ENCODE measurements at regions of chr13 and their contacts with region 1.

Region 1: GRCh38 chr13:23871616-23872220 is 17.5 kb downstream of the MIPEP start:
- DNase-seq: no peak
- H3K4me3 ChIP-seq: no peak overlapping the region
- H3K27ac ChIP-seq: no peak overlapping the region
- H3K4me1 ChIP-seq: no peaks in the 10 kb centered on the region
- H3K27me3 ChIP-seq: no peaks in the 10 kb centered on the region
- CTCF ChIP-seq: peak; percentile 54 to 56 (median 56)
- EP300 ChIP-seq: no peak
- POLR2A ChIP-seq: no peak

Region 2: GRCh38 chr13:23466144-23467002 is 405.3 kb before region 1 on chr13:
- in situ Hi-C with region 1: loop called (anchors 10 to 25 kb)
- intact Hi-C with region 1: loop called (anchors 10 kb)
- DNase-seq: peak; percentile 57
- H3K4me3 ChIP-seq: peak overlapping the region; percentile 20 to 53 (median 30)
- H3K27ac ChIP-seq: peak overlapping the region; percentile 59 to 87 (median 70)
- H3K4me1 ChIP-seq: peaks cover 0 to 13% (median 9%) of the 10 kb centered on the region in 4 donors
- H3K27me3 ChIP-seq: peaks cover 7% of the 10 kb centered on the region
- CTCF ChIP-seq: peak; percentile 35 to 61 (median 53)
- EP300 ChIP-seq: no peak
- POLR2A ChIP-seq: no peak

Region 3: DNA sequence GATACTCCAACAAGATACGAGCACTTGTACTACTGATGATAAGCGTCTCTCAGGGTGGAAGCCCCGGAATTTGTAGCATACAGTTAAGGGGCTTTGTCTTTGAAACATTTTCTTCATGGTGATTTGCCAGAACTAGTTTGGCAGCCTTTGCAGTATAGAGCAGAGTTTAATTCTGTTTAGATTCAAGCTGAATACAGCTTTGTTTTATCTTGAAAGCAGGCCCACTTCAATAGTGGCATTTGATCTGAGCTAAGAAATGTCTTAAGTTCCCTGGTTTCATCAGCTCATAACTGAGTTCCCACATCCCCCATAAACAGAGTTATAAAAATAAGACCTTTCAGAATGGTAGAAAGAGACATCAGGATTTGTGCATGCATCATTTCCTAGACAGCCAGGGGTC is 108.4 kb before region 1 on chr13:
- in situ Hi-C with region 1: no loop called
- intact Hi-C with region 1: loop called (anchors 5 kb)
- DNase-seq: no peak
- H3K4me3 ChIP-seq: no peak overlapping the region
- H3K27ac ChIP-seq: no peak overlapping the region
- H3K4me1 ChIP-seq: no peaks in the 10 kb centered on the region
- H3K27me3 ChIP-seq: no peaks in the 10 kb centered on the region
- CTCF ChIP-seq: no peak
- EP300 ChIP-seq: no peak
- POLR2A ChIP-seq: no peak